Mammary epithelial cell (primary cell): ENCODE measurements at regions of chr13 and their contacts with region 1.

Region 1: GRCh38 chr13:31174018-31174417 is 12.3 kb upstream of the HSPH1 start:
- DNase-seq: no peak
- H3K4me3 ChIP-seq: no peak overlapping the region
- H3K27ac ChIP-seq: no peak overlapping the region
- H3K4me1 ChIP-seq: peaks cover 20% of the 10 kb centered on the region
- H3K27me3 ChIP-seq: no peaks in the 10 kb centered on the region
- CTCF ChIP-seq: peak in 1 of 2 donors; percentile 26

Region 2: DNA sequence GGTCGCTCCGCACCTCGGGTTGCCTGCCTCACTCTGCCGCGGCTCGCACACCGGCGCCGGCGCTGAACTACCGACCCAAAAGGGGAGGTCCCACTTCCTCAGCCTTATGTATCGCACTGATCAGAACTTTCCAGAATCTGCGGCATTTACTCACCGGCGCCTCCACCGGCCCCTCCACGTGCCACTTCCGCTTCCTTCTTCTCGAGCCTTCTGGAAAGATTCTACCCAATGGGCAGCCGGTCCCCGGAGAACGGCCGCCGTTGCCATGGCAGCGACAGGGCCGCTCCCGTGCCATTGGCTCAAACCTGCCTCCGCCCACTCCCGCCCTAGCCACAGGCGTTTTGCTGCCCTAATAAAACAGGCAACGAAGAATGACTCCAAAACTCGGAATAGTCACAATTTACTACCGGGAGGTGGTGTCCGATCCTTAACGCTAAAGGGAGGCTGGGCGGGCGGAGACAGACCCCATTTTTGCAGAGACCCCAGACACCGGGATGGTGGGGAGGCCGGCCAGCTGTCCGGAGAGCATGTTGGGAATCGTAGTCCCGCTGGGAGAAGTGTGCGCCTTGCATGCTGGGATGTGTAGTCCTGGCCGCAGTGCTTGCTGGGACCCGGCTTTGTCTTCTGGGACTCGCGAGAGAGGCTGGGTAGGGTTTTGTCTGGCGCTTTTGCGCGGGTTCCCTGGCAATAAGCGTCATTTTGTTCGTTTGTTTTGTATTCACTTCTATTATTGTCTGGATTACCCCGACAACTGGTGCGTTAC is 12.0 kb before region 1 on chr13 and contains the start of gene HSPH1:
- CTCF ChIA-PET with region 1: no interaction called
- dilution Hi-C with region 1: no loop called
- in situ Hi-C with region 1: no loop called
- intact Hi-C with region 1: loop called (anchors 1 kb)
- DNase-seq: peak; percentile 99
- H3K4me3 ChIP-seq: peak within 1 kb of the TSS; percentile 81 to 90 (median 84)
- H3K27ac ChIP-seq: peak within 1 kb of the TSS; percentile 97
- H3K4me1 ChIP-seq: peaks cover 7% of the 10 kb centered on the region
- H3K27me3 ChIP-seq: no peaks in the 10 kb centered on the region
- CTCF ChIP-seq: peak in 1 of 2 donors; percentile 35
- total RNA-seq, gene HSPH1: 49.0 to 113 TPM

Region 3: DNA sequence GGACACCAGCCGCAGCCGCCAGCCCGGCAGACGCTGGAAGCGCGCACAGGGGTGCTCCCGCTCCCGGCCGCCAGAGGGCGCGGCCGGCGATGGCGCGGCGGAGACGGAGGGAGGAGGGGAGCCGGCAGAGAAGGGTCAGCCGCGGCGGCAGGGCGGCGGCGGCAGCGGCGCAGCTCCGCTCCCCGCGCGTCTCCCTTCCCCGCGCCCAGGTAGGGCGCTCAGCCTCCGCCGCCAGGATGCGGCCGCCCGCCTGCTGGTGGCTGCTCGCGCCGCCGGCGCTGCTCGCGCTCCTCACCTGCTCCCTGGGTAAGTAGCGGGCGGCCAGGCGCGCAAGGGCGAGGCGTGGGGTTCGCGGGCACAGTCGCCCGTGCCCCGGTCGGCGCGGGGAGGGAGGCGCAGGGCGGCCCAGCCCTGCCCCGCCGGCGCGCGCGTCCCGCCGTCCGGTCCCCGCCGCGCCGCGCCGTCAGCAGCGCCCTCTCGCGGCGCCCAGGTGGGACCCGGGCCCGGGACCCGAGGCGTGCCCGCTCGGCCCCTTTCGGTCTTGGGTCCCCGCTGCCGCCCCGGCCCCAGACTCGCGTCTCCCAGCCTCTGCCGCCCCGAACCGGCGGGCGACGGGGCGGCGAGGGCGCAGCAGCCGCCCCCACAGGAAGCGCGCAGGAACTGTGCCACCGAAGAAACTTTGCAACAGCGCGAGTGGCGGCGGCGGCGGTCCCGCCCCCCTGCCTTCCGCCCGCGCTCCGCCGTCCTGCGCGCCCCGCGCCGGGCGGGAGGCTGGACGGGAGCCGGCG is 26.0 kb after region 1 on chr13 and contains the start of gene B3GLCT:
- CTCF ChIA-PET with region 1: no interaction called
- dilution Hi-C with region 1: no loop called
- in situ Hi-C with region 1: no loop called
- intact Hi-C with region 1: loop called (anchors 1 kb)
- DNase-seq: peak; percentile 78
- H3K4me3 ChIP-seq: peak within 1 kb of the TSS; percentile 63 to 80 (median 74)
- H3K27ac ChIP-seq: peak within 1 kb of the TSS; percentile 75
- H3K4me1 ChIP-seq: peaks cover 29% of the 10 kb centered on the region
- H3K27me3 ChIP-seq: no peaks in the 10 kb centered on the region
- CTCF ChIP-seq: peak; percentile 71 to 72
- total RNA-seq, gene B3GLCT: 5.9 to 9.3 TPM

Region 4: GRCh38 chr13:31424117-31424729 is 250.2 kb after region 1 on chr13:
- CTCF ChIA-PET with region 1: no interaction called
- dilution Hi-C with region 1: no loop called
- in situ Hi-C with region 1: no loop called
- intact Hi-C with region 1: loop called (anchors 1 kb)
- DNase-seq: peak; percentile 62
- H3K4me3 ChIP-seq: no peak overlapping the region
- H3K27ac ChIP-seq: no peak overlapping the region
- H3K4me1 ChIP-seq: no peaks in the 10 kb centered on the region
- H3K27me3 ChIP-seq: peaks cover 4% of the 10 kb centered on the region
- CTCF ChIP-seq: peak; percentile 92 to 96

Region 5: DNA sequence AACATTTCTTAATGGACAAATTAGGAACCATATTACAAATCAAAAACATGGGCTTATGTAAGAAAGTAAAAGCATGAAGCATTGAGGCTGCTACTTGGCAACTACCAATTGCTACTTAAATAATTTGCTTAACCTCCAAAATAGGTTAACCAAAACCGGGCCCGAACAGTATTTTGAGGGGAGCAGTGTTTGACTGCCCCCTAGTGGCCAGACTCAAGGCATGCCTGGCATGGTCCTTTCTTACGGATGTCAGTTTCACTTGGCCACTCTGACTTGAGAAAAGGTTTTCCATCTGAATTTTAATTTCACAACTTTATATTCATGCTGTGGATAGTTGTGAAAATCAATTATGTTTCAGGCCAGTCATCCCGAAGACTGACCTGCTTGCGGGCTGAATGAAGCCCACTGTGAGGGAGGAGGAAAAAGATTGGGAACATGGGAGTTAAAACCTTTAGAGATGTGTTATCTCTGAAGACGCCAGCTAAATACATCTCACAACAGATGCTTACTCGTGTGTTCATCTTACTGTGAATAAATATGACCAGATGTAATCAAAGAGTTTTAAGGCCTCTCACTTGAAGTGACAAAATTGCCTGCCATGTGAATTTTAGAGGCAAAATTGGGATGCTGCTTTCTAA is 568.2 kb after region 1 on chr13:
- CTCF ChIA-PET with region 1: no interaction called
- dilution Hi-C with region 1: no loop called
- in situ Hi-C with region 1: no loop called
- intact Hi-C with region 1: loop called (anchors 10 kb)
- DNase-seq: peak; percentile 45
- H3K4me3 ChIP-seq: no peak overlapping the region
- H3K27ac ChIP-seq: no peak overlapping the region
- H3K4me1 ChIP-seq: no peaks in the 10 kb centered on the region
- H3K27me3 ChIP-seq: no peaks in the 10 kb centered on the region
- CTCF ChIP-seq: peak; percentile 97 to 98

Region 6: GRCh38 chr13:32135655-32136054 is 961.6 kb after region 1 on chr13:
- CTCF ChIA-PET with region 1: no interaction called
- dilution Hi-C with region 1: no loop called
- in situ Hi-C with region 1: no loop called
- intact Hi-C with region 1: no loop called
- DNase-seq: peak; percentile 30
- H3K4me3 ChIP-seq: no peak overlapping the region
- H3K27ac ChIP-seq: no peak overlapping the region
- H3K4me1 ChIP-seq: peaks cover 13% of the 10 kb centered on the region
- H3K27me3 ChIP-seq: no peaks in the 10 kb centered on the region
- CTCF ChIP-seq: no peak